ENCODE measurements at regions of chr10 and their contacts with region 1.

Region 1: GRCh38 chr10:122426829-122427228 is 27.6 kb upstream of the ARMS2 start:
- DNase-seq: no peak
- ATAC-seq: no peak
- H3K4me3 ChIP-seq: no peak overlapping the region
- H3K27ac ChIP-seq: no peak overlapping the region
- H3K4me1 ChIP-seq: peaks cover 0 to 16% (median 8%) of the 10 kb centered on the region in 9 donors
- H3K27me3 ChIP-seq: no peaks in the 10 kb centered on the region
- CTCF ChIP-seq: no peak

Region 2: GRCh38 chr10:122391875-122392274 is 35.0 kb before region 1 on chr10:
- intact Hi-C with region 1: loop called in 1 of 10 experiments (anchors 5 kb)
- DNase-seq: no peak
- ATAC-seq: peak in 6 of 8 donors; percentile 58 to 92 (median 77)
- H3K4me3 ChIP-seq: no peak overlapping the region
- H3K27ac ChIP-seq: peak overlapping the region in 5 of 10 donors; percentile 2 to 64 (median 41)
- H3K4me1 ChIP-seq: peaks cover 0 to 38% (median 20%) of the 10 kb centered on the region in 9 donors
- H3K27me3 ChIP-seq: no peaks in the 10 kb centered on the region
- CTCF ChIP-seq: no peak

Region 3: GRCh38 chr10:122990278-122990677 is 563.4 kb after region 1 on chr10:
- intact Hi-C with region 1: no loop called
- DNase-seq: no peak
- ATAC-seq: no peak
- H3K4me3 ChIP-seq: no peak overlapping the region
- H3K27ac ChIP-seq: no peak overlapping the region
- H3K4me1 ChIP-seq: no peaks in the 10 kb centered on the region
- H3K27me3 ChIP-seq: no peaks in the 10 kb centered on the region
- CTCF ChIP-seq: no peak